Psoas muscle (tissue), 8 donors: ENCODE measurements at regions of chr1 and their contacts with region 1.

Region 1: GRCh38 chr1:114771992-114772391 is 8.5 kb downstream of the SIKE1 start:
- DNase-seq: no peak
- ATAC-seq: no peak
- H3K4me3 ChIP-seq: no peak overlapping the region
- H3K27ac ChIP-seq: no peak overlapping the region
- H3K4me1 ChIP-seq: no peaks in the 10 kb centered on the region
- H3K27me3 ChIP-seq: no peaks in the 10 kb centered on the region
- CTCF ChIP-seq: no peak

Region 2: DNA sequence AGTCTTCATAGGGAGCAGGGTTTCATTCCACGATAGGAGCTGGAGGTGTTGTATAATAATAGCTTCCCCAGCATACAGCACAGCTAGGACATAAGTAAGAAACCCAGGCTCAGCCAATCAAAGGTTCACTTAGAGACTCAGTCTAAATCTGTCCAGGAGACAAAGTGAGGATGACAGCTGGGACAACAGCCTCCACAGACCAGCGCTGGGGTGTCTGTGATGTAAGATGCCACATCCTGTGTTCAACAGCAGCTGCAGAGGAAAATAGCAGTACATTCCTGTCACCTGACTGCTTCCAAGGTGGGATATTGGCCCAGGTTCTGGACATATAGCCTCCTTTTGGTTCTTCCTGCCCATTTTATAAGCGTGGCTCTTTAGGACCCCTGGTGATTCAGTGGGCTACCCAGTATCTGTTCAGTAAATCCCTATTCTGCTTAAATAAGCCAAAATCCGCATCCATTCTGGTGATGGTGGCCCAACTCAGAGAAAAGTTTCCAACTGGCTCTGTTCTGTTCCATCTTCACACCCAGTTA is 441.5 kb before region 1 on chr1:
- intact Hi-C with region 1: no loop called
- DNase-seq: no peak
- ATAC-seq: no peak
- H3K4me3 ChIP-seq: no peak overlapping the region
- H3K27ac ChIP-seq: no peak overlapping the region
- H3K4me1 ChIP-seq: no peaks in the 10 kb centered on the region
- H3K27me3 ChIP-seq: peaks cover 0 to 7% (median 0%) of the 10 kb centered on the region in 3 donors
- CTCF ChIP-seq: no peak

Region 3: GRCh38 chr1:114418247-114418646 is 353.7 kb before region 1 on chr1:
- intact Hi-C with region 1: loop called in 1 of 2 experiments (anchors 10 kb)
- DNase-seq: no peak
- ATAC-seq: no peak
- H3K4me3 ChIP-seq: no peak overlapping the region
- H3K27ac ChIP-seq: no peak overlapping the region
- H3K4me1 ChIP-seq: no peaks in the 10 kb centered on the region
- H3K27me3 ChIP-seq: no peaks in the 10 kb centered on the region
- CTCF ChIP-seq: no peak

Region 4: GRCh38 chr1:114581335-114582287 is 190.4 kb before region 1 on chr1 and contains the start of gene BCAS2:
- intact Hi-C with region 1: loop called in 1 of 2 experiments (anchors 10 kb)
- DNase-seq: peak; percentile 95 to 96
- ATAC-seq: peak; percentile 95 to 98 (median 98)
- H3K4me3 ChIP-seq: peak within 1 kb of the TSS; percentile 75
- H3K27ac ChIP-seq: peak within 1 kb of the TSS; percentile 92
- H3K4me1 ChIP-seq: peaks cover 8% of the 10 kb centered on the region
- H3K27me3 ChIP-seq: no peaks in the 10 kb centered on the region
- CTCF ChIP-seq: no peak
- total RNA-seq, gene BCAS2: 22.0 to 33.6 (median 27.0) TPM

Region 5: GRCh38 chr1:114620419-114620818 is 151.6 kb before region 1 on chr1:
- intact Hi-C with region 1: loop called in 1 of 2 experiments (anchors 10 kb)
- DNase-seq: no peak
- ATAC-seq: no peak
- H3K4me3 ChIP-seq: no peak overlapping the region
- H3K27ac ChIP-seq: no peak overlapping the region
- H3K4me1 ChIP-seq: no peaks in the 10 kb centered on the region
- H3K27me3 ChIP-seq: no peaks in the 10 kb centered on the region
- CTCF ChIP-seq: no peak